Activated T-helper 1 cell treated with anti-CD3 and anti-CD28 coated beads, Interleukin-12 subunit alpha, Interleukin-12 subunit beta, Interleukin-2, Interleukin-4 antibody, amounts not matched to agents 30 ng/mL and 10 ng/mL and 1 ng/mL, durations not matched to agents 14 hours and 24 hours and 36 hours (primary cell): ENCODE measurements at regions of chr7 and their contacts with region 1.

Region 1: DNA sequence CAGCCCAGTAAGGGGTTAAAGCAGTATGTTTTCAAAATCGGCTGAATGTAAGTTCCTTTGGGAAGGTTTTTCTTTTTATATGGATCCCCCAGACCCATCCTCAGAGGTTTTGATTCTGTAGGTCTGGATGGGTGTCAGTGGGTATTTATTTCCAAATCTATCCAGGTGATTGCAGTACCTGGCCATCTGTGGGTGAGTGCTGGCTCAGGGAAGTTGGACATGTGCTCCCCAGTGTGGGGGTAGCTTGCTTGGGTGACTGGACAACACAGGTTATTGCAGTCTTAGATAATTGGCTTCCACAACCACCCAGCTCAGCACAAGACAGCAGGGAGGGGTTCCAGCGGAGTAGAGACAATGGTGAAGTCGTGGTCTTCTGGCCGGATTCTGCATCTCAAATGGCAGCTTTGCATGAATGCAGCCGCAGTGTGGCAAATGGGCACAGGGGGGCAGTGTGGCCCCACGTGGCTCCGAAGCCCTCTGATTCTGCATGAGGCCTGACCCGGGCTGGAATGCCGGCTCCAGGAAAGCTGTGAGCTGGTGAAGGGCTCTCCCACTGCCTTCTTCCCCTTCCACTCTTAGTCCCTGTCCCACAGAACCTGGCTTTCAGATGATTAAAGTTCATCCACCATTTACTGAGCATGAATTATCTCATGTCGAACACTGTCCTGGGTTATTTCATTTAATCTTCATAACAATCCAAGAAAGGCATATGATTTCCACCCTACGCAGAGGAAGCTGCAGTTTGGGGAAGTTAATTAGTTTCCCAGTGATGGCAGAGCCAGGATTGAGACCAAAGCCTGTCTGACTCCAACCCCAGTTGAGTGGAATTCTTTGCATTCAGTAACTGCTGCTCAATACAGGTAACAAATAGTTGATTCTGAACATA is 64.5 kb upstream of the SYPL1 start:
- DNase-seq: peak; percentile 54
- H3K4me3 Mint-ChIP-seq: no peak overlapping the region
- H3K27ac Mint-ChIP-seq: no peak overlapping the region
- H3K4me1 Mint-ChIP-seq: peaks cover 5% of the 10 kb centered on the region
- H3K27me3 Mint-ChIP-seq: peaks cover 11% of the 10 kb centered on the region

Region 2: GRCh38 chr7:106255246-106255645 is 78.6 kb after region 1 on chr7:
- intact Hi-C with region 1: loop called (anchors 2 kb)
- DNase-seq: no peak
- H3K4me3 Mint-ChIP-seq: no peak overlapping the region
- H3K27ac Mint-ChIP-seq: peak overlapping the region; percentile 44
- H3K4me1 Mint-ChIP-seq: peaks cover 46% of the 10 kb centered on the region
- H3K27me3 Mint-ChIP-seq: no peaks in the 10 kb centered on the region

Region 3: GRCh38 chr7:106461993-106462859 is 285.6 kb after region 1 on chr7:
- intact Hi-C with region 1: loop called (anchors 1 kb)
- DNase-seq: no peak
- H3K4me3 Mint-ChIP-seq: no peak overlapping the region
- H3K27ac Mint-ChIP-seq: no peak overlapping the region
- H3K4me1 Mint-ChIP-seq: peaks cover 30% of the 10 kb centered on the region
- H3K27me3 Mint-ChIP-seq: no peaks in the 10 kb centered on the region

Region 4: GRCh38 chr7:106542550-106543220 is 366.0 kb after region 1 on chr7:
- intact Hi-C with region 1: loop called (anchors 1 kb)
- DNase-seq: no peak
- H3K4me3 Mint-ChIP-seq: no peak overlapping the region
- H3K27ac Mint-ChIP-seq: no peak overlapping the region
- H3K4me1 Mint-ChIP-seq: peaks cover 12% of the 10 kb centered on the region
- H3K27me3 Mint-ChIP-seq: no peaks in the 10 kb centered on the region

Region 5: GRCh38 chr7:106736508-106737201 is 560.0 kb after region 1 on chr7:
- intact Hi-C with region 1: loop called (anchors 1 kb)
- DNase-seq: peak; percentile 31
- H3K4me3 Mint-ChIP-seq: no peak overlapping the region
- H3K27ac Mint-ChIP-seq: no peak overlapping the region
- H3K4me1 Mint-ChIP-seq: peaks cover 32% of the 10 kb centered on the region
- H3K27me3 Mint-ChIP-seq: peaks cover 2% of the 10 kb centered on the region